K562 (cell line): ENCODE measurements at regions of chr9 and their contacts with region 1.

Region 1: DNA sequence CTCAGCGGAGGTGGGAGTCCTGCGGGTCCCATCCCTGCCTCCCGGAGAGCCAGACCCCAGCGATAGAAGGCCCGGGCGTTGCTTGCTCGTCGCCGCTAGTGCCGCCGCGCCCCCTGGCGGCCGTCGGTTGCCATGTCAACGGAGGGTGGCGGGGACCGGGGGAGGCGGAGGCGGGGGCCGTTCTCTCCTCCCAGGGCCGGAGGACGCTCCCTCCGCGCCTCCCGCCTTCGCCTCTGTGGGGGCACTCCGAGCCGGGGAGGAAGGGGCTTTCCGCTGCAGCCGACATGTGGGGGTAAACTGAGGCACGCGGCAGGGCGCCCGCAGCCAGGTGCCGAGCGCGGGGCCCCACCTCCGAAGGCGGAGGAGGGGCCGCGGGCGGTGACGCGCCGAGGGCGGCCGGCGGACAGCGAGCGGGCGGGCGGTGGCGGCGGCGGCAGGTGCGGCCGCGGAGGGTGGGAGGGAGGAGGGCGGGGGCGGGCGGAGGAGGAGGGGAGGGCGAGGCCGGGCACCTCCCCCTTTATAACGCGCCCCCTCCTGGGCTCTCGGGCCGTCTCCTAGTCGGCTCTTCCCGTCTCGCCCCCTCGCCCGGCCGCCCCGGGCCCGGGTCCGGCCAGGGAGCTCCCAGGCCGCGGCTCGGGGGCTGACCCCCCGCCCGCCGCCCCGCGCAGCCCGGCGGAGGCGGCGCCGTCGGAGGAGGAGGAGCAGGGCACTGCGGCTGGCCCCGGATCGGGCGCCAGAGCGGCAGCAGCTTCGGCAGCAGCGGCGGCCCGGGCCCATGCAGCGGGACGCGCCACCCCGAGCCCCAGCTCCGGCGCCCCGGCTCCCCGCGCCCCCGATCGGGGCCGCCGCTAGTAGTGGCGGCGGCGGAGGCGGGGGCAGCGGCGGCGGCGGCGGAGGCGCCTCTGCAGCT is 556 bp upstream of the CDK9 start:
- DNase-seq: peak; percentile 88 to 94 (median 90)
- ATAC-seq: peak; percentile 74
- H3K4me3 ChIP-seq: peak overlapping the region; percentile 99
- H3K27ac ChIP-seq: peak overlapping the region; percentile 93
- H3K4me1 ChIP-seq: peaks cover 7 to 41% of the 10 kb centered on the region in 2 experiments; a peak in 4 of 5 replicates
- H3K27me3 ChIP-seq: no peaks in the 10 kb centered on the region
- CTCF ChIP-seq: peak; percentile 76 to 94 (median 86)
- EP300 ChIP-seq: no peak
- POLR2A ChIP-seq: no peak
- RAD21 ChIP-seq: peak; percentile 85 to 92

Region 2: DNA sequence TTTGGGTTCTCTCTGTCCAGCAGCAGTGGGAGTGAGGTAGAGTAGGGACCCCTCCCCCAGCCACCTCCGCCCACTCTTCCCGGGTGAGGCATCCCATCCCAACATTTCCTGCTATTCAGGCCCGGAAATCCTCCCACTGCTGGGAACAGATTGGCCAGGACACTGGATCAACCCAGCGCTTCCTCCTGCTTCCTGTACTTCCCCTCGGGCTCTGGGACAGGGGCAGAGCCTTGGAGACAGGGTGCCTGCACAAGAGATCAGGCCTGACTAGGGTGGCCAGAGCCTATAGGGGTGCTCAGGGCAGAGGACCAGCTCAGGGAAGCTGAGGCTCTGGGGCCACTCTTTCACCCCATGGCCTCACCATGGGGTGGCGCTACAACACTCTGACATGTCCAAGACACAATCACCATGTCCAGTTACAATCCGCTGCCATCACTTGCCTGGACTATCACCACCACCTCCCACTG is 21.3 kb before region 1 on chr9:
- CTCF ChIA-PET with region 1: interaction called, 15 read pairs
- POLR2A ChIA-PET with region 1: interaction called, 4 read pairs
- in situ Hi-C with region 1: no loop called
- intact Hi-C with region 1: loop called (anchors 1 kb)
- DNase-seq: peak; percentile 48 to 85 (median 62)
- ATAC-seq: peak; percentile 96
- H3K4me3 ChIP-seq: no peak overlapping the region
- H3K27ac ChIP-seq: no peak overlapping the region
- H3K4me1 ChIP-seq: peaks cover 13 to 32% of the 10 kb centered on the region in 2 experiments
- H3K27me3 ChIP-seq: no peaks in the 10 kb centered on the region; a peak in 1 of 5 replicates
- CTCF ChIP-seq: peak; percentile 78 to 85 (median 84)
- EP300 ChIP-seq: no peak
- POLR2A ChIP-seq: no peak
- RAD21 ChIP-seq: peak; percentile 58 to 91